ENCODE measurements at regions of chr2 and their contacts with region 1.

Region 1: GRCh38 chr2:204197336-204198005 is 260.9 kb downstream of the ICOS start:
- DNase-seq: no peak
- ATAC-seq: no peak
- H3K4me3 ChIP-seq: no peak overlapping the region
- H3K4me3 Mint-ChIP-seq: no peak overlapping the region
- H3K27ac ChIP-seq: no peak overlapping the region
- H3K27ac Mint-ChIP-seq: no peak overlapping the region
- H3K4me1 ChIP-seq: no peaks in the 10 kb centered on the region
- H3K4me1 Mint-ChIP-seq: peaks cover 0 to 9% (median 0%) of the 10 kb centered on the region in 7 donors
- H3K27me3 ChIP-seq: no peaks in the 10 kb centered on the region
- H3K27me3 Mint-ChIP-seq: peaks cover 0 to 34% (median 8%) of the 10 kb centered on the region in 5 donors

Region 2: DNA sequence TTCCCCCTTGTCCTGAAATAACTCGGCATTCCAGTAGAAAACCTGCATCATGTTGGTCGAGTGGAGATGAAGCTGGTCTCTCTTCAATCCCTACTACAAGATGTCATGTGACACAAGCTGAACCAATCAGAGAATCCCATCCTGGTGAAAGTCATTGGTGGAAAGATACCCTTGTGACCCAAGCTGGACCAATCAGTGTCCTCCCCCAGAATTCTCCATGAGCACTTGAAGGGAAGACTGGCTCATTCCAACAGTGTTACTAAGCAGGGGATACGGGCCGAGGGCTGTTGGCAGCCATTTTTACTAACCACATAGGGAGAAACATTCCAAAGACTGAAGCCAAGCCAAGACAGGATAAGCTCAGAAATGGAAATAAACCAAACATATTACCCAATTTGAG is 37.4 kb after region 1 on chr2:
- CTCF ChIA-PET with region 1: no interaction called
- POLR2A ChIA-PET with region 1: no interaction called
- intact Hi-C with region 1: loop called in 1 of 2 experiments (anchors 1 kb)
- DNase-seq: no peak
- ATAC-seq: no peak
- H3K4me3 ChIP-seq: no peak overlapping the region
- H3K4me3 Mint-ChIP-seq: no peak overlapping the region
- H3K27ac ChIP-seq: no peak overlapping the region
- H3K27ac Mint-ChIP-seq: no peak overlapping the region
- H3K4me1 ChIP-seq: no peaks in the 10 kb centered on the region
- H3K4me1 Mint-ChIP-seq: no peaks in the 10 kb centered on the region
- H3K27me3 ChIP-seq: peaks cover 0 to 3% of the 10 kb centered on the region in 2 donors
- H3K27me3 Mint-ChIP-seq: peaks cover 0 to 22% (median 5%) of the 10 kb centered on the region in 5 donors